ENCODE measurements at regions of chr3 and their contacts with region 1.

Region 1: GRCh38 chr3:157865352-157866000 is 240.7 kb downstream of the SHOX2 start:
- DNase-seq: peak; percentile 58
- H3K4me3 Mint-ChIP-seq: no peak overlapping the region
- H3K27ac Mint-ChIP-seq: no peak overlapping the region
- H3K4me1 Mint-ChIP-seq: no peaks in the 10 kb centered on the region
- H3K27me3 Mint-ChIP-seq: no peaks in the 10 kb centered on the region

Region 2: DNA sequence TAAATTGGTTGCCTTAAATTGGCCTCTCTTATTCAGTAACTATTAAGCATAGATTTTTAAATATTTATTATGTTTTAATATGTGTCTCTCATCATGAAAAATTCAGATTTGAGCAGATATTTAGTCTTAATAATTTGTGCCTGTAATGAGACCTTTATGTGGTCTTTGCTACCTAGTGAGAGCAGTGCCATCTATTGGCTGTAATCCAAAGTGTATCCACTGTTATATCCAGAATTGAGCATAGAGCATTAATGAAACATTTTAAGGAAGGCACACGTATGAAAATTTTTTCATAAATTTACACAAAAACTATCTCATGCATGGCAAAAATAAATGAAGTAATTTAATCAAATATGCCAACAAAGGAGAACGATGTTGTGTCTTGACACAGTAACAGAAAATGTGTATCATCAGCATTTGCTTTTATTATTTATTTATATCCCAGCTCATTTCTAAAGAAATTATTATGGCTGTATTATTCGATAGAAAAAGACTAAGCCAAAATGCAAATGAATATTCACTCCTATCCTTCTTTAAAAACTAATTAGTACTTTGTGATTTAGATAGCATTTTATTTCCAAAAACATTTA is 448.0 kb after region 1 on chr3:
- CTCF ChIA-PET with region 1: interaction called, 3 read pairs
- POLR2A ChIA-PET with region 1: no interaction called
- intact Hi-C with region 1: loop called (anchors 1 kb)
- DNase-seq: no peak
- H3K4me3 Mint-ChIP-seq: no peak overlapping the region
- H3K27ac Mint-ChIP-seq: no peak overlapping the region
- H3K4me1 Mint-ChIP-seq: no peaks in the 10 kb centered on the region
- H3K27me3 Mint-ChIP-seq: no peaks in the 10 kb centered on the region

Region 3: GRCh38 chr3:158539414-158540014 is 674.0 kb after region 1 on chr3:
- CTCF ChIA-PET with region 1: no interaction called
- POLR2A ChIA-PET with region 1: no interaction called
- intact Hi-C with region 1: loop called (anchors 10 kb)
- DNase-seq: peak; percentile 35
- H3K4me3 Mint-ChIP-seq: no peak overlapping the region
- H3K27ac Mint-ChIP-seq: no peak overlapping the region
- H3K4me1 Mint-ChIP-seq: no peaks in the 10 kb centered on the region
- H3K27me3 Mint-ChIP-seq: no peaks in the 10 kb centered on the region